Naive thymus-derived CD8-positive, alpha-beta T cell (primary cell): ENCODE measurements at regions of chr6 and their contacts with region 1.

Region 1: GRCh38 chr6:36519352-36519751 is 27.9 kb downstream of the STK38 start:
- DNase-seq: no peak
- ATAC-seq: no peak
- H3K4me3 Mint-ChIP-seq: peak overlapping the region in 2 of 10 donors; percentile 1 to 7
- H3K27ac Mint-ChIP-seq: peak overlapping the region in 8 of 10 donors; percentile 52 to 83 (median 68)
- H3K4me1 Mint-ChIP-seq: peaks cover 10 to 56% (median 37%) of the 10 kb centered on the region in 4 donors
- H3K27me3 Mint-ChIP-seq: no peaks in the 10 kb centered on the region

Region 2: GRCh38 chr6:36539814-36540568 is 20.6 kb after region 1 on chr6:
- POLR2A ChIA-PET with region 1: interaction called, 19 read pairs
- DNase-seq: peak in 5 of 10 donors; percentile 19 to 83 (median 59)
- ATAC-seq: peak; percentile 65 to 86
- H3K4me3 Mint-ChIP-seq: peak overlapping the region; percentile 57 to 100 (median 80)
- H3K27ac Mint-ChIP-seq: peak overlapping the region; percentile 71 to 99 (median 95)
- H3K4me1 Mint-ChIP-seq: peaks cover 15 to 81% (median 72%) of the 10 kb centered on the region in 4 donors
- H3K27me3 Mint-ChIP-seq: no peaks in the 10 kb centered on the region